ENCODE measurements at regions of chr1 and their contacts with region 1.

Region 1: GRCh38 chr1:64136752-64137411 is 66.5 kb upstream of the UBE2U start:
- DNase-seq: peak; percentile 78
- H3K4me3 Mint-ChIP-seq: no peak overlapping the region
- H3K27ac Mint-ChIP-seq: no peak overlapping the region
- H3K4me1 Mint-ChIP-seq: no peaks in the 10 kb centered on the region
- H3K27me3 Mint-ChIP-seq: peaks cover 3% of the 10 kb centered on the region

Region 2: DNA sequence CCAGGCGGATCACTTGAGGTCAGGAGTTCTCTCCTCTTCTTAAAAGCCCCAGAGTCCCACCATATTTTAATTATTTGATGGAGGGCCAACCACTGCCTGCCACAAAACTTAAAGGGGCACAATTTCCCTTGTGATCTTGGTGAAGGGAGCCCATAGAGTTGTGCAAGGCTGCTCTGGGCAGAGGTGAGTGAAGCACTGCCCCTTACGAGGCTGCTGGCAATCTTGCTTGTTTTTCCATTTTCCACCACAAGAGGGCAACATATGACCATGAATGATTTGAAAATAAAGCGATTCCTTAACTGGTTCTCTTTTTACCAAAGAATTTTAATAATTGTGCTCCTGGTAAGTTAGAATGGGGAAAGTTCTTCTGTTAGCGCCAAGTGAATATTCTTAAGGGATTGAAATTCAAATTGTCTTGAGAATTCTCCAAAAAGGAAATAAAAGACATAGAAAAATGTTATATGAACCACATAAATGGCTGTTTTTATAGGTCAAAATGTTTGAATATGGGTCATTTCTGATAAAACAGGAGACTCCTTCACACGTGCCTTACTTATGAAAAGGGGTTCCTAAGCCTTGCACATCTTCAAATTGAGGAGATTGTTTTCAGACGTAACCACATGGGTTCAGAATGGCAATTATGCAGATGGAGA is 521.0 kb before region 1 on chr1:
- CTCF ChIA-PET with region 1: interaction called, 34 read pairs
- POLR2A ChIA-PET with region 1: no interaction called
- intact Hi-C with region 1: loop called (anchors 1 kb)
- DNase-seq: peak; percentile 48
- H3K4me3 Mint-ChIP-seq: no peak overlapping the region
- H3K27ac Mint-ChIP-seq: no peak overlapping the region
- H3K4me1 Mint-ChIP-seq: peaks cover 3% of the 10 kb centered on the region
- H3K27me3 Mint-ChIP-seq: no peaks in the 10 kb centered on the region

Region 3: DNA sequence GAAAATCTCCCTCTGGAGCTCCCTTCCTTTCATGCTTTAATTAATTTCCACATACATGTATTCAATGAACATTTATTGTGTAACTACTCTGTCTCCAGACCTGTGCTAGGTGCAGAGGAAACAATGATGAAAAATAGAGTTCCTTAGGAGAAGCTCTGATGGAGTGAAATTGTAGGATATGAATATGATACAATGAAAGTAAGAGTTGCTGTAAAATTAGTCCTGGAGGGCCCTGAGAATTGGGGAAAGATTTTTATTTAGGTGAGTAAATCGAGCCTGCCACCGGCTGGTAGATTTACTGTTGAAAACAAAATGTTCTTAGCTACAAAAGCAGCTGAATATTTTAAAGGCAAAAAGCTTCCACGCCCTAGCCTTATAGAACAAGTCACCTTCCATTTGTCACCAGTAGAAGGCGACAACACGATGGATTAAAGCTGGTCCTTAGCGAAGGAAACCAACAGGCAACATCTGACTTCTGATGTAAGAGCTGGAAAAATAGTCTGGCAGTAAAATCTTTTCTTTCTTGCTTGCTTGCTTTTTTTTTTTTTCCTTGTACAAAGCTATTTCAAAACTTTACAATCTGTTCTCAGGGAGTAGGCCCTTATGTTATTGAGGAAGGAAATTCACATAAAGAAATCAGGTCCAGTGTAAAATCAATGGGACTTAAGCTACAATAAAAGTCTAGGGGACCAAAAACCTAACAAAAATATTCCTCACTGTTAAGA is 445.0 kb before region 1 on chr1:
- CTCF ChIA-PET with region 1: interaction called, 39 read pairs
- POLR2A ChIA-PET with region 1: no interaction called
- intact Hi-C with region 1: loop called (anchors 1 kb)
- DNase-seq: peak; percentile 35
- H3K4me3 Mint-ChIP-seq: no peak overlapping the region
- H3K27ac Mint-ChIP-seq: no peak overlapping the region
- H3K4me1 Mint-ChIP-seq: no peaks in the 10 kb centered on the region
- H3K27me3 Mint-ChIP-seq: no peaks in the 10 kb centered on the region

Region 4: GRCh38 chr1:64124704-64125440 is 12.0 kb before region 1 on chr1:
- CTCF ChIA-PET with region 1: interaction called, 11 read pairs
- POLR2A ChIA-PET with region 1: no interaction called
- intact Hi-C with region 1: no loop called
- DNase-seq: no peak
- H3K4me3 Mint-ChIP-seq: no peak overlapping the region
- H3K27ac Mint-ChIP-seq: no peak overlapping the region
- H3K4me1 Mint-ChIP-seq: no peaks in the 10 kb centered on the region
- H3K27me3 Mint-ChIP-seq: peaks cover 12% of the 10 kb centered on the region

Region 5: DNA sequence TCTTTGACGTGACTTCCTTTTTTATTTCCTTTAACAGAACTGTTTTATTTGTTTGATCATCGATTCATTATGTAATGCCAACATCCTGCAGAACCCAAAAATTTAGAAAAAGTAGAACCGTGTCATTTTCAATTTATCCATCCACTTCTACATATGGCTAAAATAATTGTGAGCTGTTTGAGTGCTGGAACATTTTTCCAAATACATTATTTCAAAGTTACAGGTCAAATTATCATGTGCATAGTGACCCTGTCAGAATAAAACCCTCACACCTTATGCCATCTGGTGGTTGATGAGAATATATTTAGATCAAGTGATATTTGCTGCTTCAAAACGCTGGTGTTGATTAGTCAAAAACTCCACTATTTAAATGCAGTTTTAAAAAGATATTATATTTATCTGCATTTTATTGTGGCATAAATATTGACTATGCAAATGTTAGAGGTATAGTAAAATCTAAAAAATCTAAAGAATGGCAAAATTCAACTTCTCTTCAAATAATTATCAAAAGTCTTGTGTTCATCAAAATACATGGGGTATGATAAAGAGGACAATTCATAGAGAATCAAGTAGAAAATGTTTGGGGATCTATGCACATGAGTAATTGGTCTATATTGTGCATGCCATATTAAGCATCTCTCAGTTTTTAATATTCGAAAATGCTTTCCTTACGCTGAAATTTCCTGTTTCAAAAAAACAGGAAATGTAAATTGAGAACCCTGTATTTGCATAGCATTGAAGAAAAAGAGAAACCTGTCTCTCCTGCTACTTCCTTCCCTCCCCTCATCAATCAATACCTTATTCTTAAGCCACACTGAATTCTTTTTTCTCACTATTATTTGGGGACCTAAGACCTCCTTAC is 106.2 kb after region 1 on chr1:
- CTCF ChIA-PET with region 1: interaction called, 30 read pairs
- POLR2A ChIA-PET with region 1: no interaction called
- intact Hi-C with region 1: no loop called
- DNase-seq: no peak
- H3K4me3 Mint-ChIP-seq: no peak overlapping the region
- H3K27ac Mint-ChIP-seq: no peak overlapping the region
- H3K4me1 Mint-ChIP-seq: peaks cover 18% of the 10 kb centered on the region
- H3K27me3 Mint-ChIP-seq: peaks cover 13% of the 10 kb centered on the region

Region 6: DNA sequence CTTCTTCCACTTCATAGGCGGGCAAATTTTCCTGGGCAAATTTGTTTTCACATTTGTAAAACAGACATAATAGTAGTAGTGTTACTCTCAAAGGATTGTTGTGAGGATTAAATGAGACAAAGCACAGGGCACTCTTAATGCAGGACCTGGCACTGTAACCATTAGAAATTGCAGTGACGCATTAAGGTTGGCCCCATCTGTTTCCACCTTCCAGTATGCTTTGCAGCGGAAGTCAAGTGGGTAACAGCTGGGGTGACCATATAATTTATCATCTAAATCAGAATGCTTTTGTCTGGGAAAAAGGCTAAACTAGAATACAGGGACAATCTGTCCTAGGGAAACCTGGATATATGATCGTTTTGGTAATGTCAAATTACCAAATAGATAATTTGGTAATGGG is 200.6 kb after region 1 on chr1:
- CTCF ChIA-PET with region 1: no interaction called
- POLR2A ChIA-PET with region 1: no interaction called
- intact Hi-C with region 1: no loop called
- DNase-seq: no peak
- H3K4me3 Mint-ChIP-seq: no peak overlapping the region
- H3K27ac Mint-ChIP-seq: no peak overlapping the region
- H3K4me1 Mint-ChIP-seq: no peaks in the 10 kb centered on the region
- H3K27me3 Mint-ChIP-seq: peaks cover 2% of the 10 kb centered on the region